AG04450 (cell line): ENCODE measurements at regions of chr6 and their contacts with region 1.

Region 1: DNA sequence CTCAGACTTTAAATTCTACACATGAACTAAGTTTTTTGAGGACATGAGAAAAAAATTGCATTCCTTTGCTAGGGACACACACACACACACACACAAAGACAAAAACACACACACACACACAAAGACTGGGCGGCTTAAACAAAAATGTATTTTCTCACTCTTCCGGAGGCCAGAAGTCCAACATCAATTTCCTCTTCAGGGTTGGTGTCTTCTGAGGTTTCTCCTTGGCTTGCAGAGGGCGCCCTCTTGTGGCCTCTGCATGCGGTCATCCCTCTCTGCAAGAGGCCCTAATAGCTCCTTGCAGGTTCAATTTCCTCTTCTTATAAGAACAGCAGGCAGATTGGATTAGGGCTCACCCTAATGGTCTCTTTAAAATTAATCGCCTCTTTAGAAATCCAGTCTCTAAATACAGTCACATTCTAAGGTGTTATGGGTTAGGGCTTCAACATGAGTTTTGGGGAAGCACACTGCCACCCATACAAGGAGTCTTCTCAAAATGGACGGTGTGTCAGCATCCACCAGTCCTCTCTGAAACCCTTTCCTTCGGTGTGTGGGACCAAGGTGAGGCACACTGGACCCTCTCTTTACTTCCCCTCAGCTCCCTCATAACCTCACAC is 61.4 kb downstream of the GPR6 start:
- DNase-seq: peak; percentile 79
- H3K4me3 ChIP-seq: peak overlapping the region; percentile 38
- H3K27ac ChIP-seq: no peak overlapping the region
- H3K27me3 ChIP-seq: peaks cover under 1% of the 10 kb centered on the region
- CTCF ChIP-seq: peak; percentile 98

Region 2: DNA sequence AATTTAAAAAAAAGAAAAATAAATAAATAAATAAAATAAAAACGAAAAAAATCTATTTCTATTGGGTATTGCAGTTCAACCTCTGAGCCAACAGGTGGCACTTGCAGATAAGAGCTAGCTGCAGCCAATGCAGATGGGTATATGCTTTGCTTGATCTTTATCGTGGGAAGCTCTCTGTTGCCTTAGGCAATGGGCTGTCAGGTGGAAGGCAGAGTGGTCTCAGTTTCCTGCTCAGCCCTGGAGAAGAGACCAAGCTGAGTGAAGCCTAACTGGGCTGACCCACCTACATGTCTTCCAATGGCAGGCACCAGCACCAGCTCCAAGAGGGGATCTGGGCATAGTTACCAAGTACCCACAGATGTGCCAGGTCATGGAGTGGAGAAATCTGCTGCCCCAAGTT is 443.5 kb before region 1 on chr6:
- CTCF ChIA-PET with region 1: interaction called, 19 read pairs
- POLR2A ChIA-PET with region 1: no interaction called
- DNase-seq: no peak
- H3K4me3 ChIP-seq: no peak overlapping the region
- H3K27ac ChIP-seq: no peak overlapping the region
- H3K27me3 ChIP-seq: no peaks in the 10 kb centered on the region
- CTCF ChIP-seq: peak; percentile 57

Region 3: GRCh38 chr6:109705258-109705657 is 334.2 kb before region 1 on chr6:
- CTCF ChIA-PET with region 1: interaction called, 364 read pairs
- POLR2A ChIA-PET with region 1: interaction called, 3 read pairs
- DNase-seq: peak; percentile 74
- H3K4me3 ChIP-seq: no peak overlapping the region
- H3K27ac ChIP-seq: no peak overlapping the region
- H3K27me3 ChIP-seq: no peaks in the 10 kb centered on the region
- CTCF ChIP-seq: peak; percentile 100

Region 4: GRCh38 chr6:109918252-109918651 is 121.2 kb before region 1 on chr6:
- CTCF ChIA-PET with region 1: no interaction called
- POLR2A ChIA-PET with region 1: no interaction called
- DNase-seq: no peak
- H3K4me3 ChIP-seq: no peak overlapping the region
- H3K27ac ChIP-seq: no peak overlapping the region
- H3K27me3 ChIP-seq: no peaks in the 10 kb centered on the region
- CTCF ChIP-seq: no peak

Region 5: GRCh38 chr6:110002676-110003075 is 36.8 kb before region 1 on chr6:
- CTCF ChIA-PET with region 1: interaction called, 12 read pairs
- POLR2A ChIA-PET with region 1: interaction called, 4 read pairs
- DNase-seq: no peak
- H3K4me3 ChIP-seq: no peak overlapping the region
- H3K27ac ChIP-seq: no peak overlapping the region
- H3K27me3 ChIP-seq: no peaks in the 10 kb centered on the region
- CTCF ChIP-seq: no peak

Region 6: DNA sequence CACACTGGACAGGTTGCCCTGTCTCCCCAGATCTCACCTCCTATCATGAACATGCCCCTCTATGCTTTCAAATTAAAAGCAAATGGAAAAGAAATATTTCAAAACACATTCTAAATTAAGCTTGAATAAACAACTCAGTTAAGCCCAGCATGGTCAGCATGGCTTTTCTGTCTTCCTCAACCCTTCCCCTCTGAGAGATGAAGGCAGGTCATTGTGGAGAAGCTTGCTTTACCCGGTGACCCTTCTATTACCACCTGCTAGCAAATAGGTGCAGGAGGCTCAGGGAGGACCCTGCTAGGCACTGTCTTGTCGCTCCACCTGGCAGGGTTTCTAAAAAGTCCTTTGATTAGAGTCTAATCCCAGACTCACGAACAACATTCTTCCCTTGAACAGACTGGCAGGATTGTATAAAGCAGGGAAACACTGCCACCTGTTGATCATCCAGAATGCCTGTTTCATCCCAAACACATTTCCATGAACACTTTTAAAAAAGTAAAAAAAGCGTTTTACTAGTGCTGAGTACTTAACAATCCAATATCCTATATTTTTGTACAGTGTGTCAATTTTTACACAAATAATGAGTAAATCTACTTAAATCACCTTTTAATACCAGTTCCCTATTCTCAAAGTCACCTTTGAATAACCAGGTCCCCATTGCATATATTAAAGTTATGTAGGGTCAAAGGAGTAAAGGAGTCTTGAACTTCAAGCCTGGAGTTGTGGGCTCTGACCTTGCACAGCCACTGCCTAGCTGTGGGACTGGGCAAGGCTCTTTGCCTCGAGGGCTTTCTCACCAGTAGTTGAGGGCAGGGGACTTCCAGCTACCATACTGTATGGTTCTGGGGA is 14.1 kb after region 1 on chr6:
- CTCF ChIA-PET with region 1: interaction called, 58 read pairs
- POLR2A ChIA-PET with region 1: no interaction called
- DNase-seq: peak; percentile 24
- H3K4me3 ChIP-seq: no peak overlapping the region
- H3K27ac ChIP-seq: no peak overlapping the region
- H3K27me3 ChIP-seq: peaks cover 15% of the 10 kb centered on the region
- CTCF ChIP-seq: peak; percentile 82